H1 (cell line): ENCODE measurements at regions of chr16 and their contacts with region 1.

Region 1: DNA sequence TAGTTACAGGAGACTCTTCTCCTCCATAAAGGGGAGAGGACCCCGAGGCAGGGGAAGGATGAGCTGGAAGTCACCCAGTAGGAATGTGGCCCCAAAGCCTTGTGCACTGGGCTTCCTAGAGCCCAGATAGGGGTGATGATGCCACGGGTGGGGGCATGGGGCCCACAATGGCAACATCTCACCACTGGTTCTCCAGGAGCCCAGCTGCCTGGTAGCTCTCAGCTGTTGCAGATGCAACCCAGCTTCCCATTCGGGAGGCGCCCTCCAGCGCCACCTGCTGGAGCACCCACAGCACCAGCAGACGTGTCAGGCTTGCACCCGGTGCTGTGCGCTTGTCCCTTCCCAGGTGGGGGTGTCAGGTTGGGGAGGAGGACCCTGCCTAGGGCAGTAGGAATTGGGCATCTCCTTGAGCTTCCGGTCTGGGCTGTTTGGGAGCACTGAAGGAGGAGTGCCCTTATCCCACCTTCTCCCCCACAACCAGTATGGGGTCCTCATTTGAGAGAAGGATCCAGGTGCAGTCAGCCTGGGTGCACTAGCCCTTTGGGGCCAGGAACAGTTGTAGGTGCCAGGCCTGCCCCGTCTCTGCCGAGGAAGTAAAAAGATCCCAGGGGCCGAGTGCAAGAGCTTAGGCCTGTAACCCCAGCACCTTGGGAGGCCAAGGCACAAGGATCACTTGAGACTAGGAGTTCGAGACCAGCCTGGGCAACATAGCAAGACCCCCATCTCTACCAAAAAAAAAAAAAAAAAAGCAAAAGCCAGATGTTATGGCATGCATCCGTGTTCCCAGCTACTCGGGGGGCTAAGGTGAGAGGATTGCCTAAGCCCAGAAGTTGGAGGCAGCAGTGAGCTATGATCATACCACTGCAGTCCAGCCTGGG is 14.4 kb downstream of the CDIPT start:
- DNase-seq: peak; percentile 33 to 90
- H3K4me3 ChIP-seq: no peak overlapping the region
- H3K27ac ChIP-seq: no peak overlapping the region
- H3K4me1 ChIP-seq: no peaks in the 10 kb centered on the region; a peak in 1 of 7 replicates
- H3K27me3 ChIP-seq: no peaks in the 10 kb centered on the region
- CTCF ChIP-seq: peak; percentile 88 to 99 (median 94)
- EP300 ChIP-seq: no peak
- POLR2A ChIP-seq: no peak
- RAD21 ChIP-seq: peak; percentile 69 to 85

Region 2: GRCh38 chr16:29708917-29709600 is 139.6 kb before region 1 on chr16:
- CTCF ChIA-PET with region 1: no interaction called
- POLR2A ChIA-PET with region 1: no interaction called
- DNase-seq: peak; percentile 73 to 87
- H3K4me3 ChIP-seq: peak overlapping the region; percentile 65 to 99 (median 74)
- H3K27ac ChIP-seq: peak overlapping the region; percentile 91
- H3K4me1 ChIP-seq: peaks cover 0 to 7% (median 2%) of the 10 kb centered on the region in 4 experiments; a peak in 1 of 7 replicates
- H3K27me3 ChIP-seq: no peaks in the 10 kb centered on the region
- CTCF ChIP-seq: 0 out of 4 replicates have a peak, but pooled peaks of 1 of the 3 experiments have one; percentile 1
- EP300 ChIP-seq: no peak
- POLR2A ChIP-seq: peak; percentile 78 to 93
- RAD21 ChIP-seq: no peak

Region 3: GRCh38 chr16:29756654-29757053 is 92.0 kb before region 1 on chr16:
- CTCF ChIA-PET with region 1: no interaction called
- POLR2A ChIA-PET with region 1: no interaction called
- DNase-seq: no peak
- H3K4me3 ChIP-seq: no peak overlapping the region
- H3K27ac ChIP-seq: no peak overlapping the region
- H3K4me1 ChIP-seq: no peaks in the 10 kb centered on the region
- H3K27me3 ChIP-seq: no peaks in the 10 kb centered on the region
- CTCF ChIP-seq: no peak
- EP300 ChIP-seq: no peak
- POLR2A ChIP-seq: no peak
- RAD21 ChIP-seq: no peak

Region 4: GRCh38 chr16:29784901-29785500 is 63.7 kb before region 1 on chr16:
- CTCF ChIA-PET with region 1: interaction called, 12 read pairs
- POLR2A ChIA-PET with region 1: no interaction called
- DNase-seq: peak; percentile 70 to 95
- H3K4me3 ChIP-seq: peak overlapping the region; percentile 4 to 50 (median 33); a peak in 6 of 8 replicates
- H3K27ac ChIP-seq: no peak overlapping the region
- H3K4me1 ChIP-seq: peaks cover 0 to 8% (median 2%) of the 10 kb centered on the region in 4 experiments; a peak in 4 of 7 replicates
- H3K27me3 ChIP-seq: peaks cover 0 to under 1% (median 0%) of the 10 kb centered on the region in 4 experiments; a peak in 2 of 7 replicates
- CTCF ChIP-seq: peak; percentile 85 to 98 (median 97)
- EP300 ChIP-seq: no peak
- POLR2A ChIP-seq: no peak
- RAD21 ChIP-seq: peak; percentile 54 to 68

Region 5: GRCh38 chr16:29815793-29816693 is 32.6 kb before region 1 on chr16 and contains the start of gene PAGR1:
- CTCF ChIA-PET with region 1: interaction called, 212 read pairs
- POLR2A ChIA-PET with region 1: interaction called, 167 read pairs
- DNase-seq: peak; percentile 98
- H3K4me3 ChIP-seq: peak within 1 kb of the TSS; percentile 59 to 91 (median 83)
- H3K27ac ChIP-seq: peak within 1 kb of the TSS; percentile 94; the same call in 1 of the 2 replicates
- H3K4me1 ChIP-seq: peaks cover 0 to 36% (median 23%) of the 10 kb centered on the region in 4 experiments; a peak in 6 of 7 replicates
- H3K27me3 ChIP-seq: no peaks in the 10 kb centered on the region
- CTCF ChIP-seq: peak in 2 of 3 experiments; percentile 71 to 78; a peak in 3 of 4 replicates
- EP300 ChIP-seq: no peak
- POLR2A ChIP-seq: peak in 1 of 2 experiments; percentile 86; a peak in 2 of 3 replicates
- RAD21 ChIP-seq: peak; percentile 60 to 72
- total RNA-seq, gene PAGR1: 56.4 and 56.6 TPM in 2 replicates

Region 6: GRCh38 chr16:29836623-29837022 is 12.0 kb before region 1 on chr16:
- CTCF ChIA-PET with region 1: interaction called, 28 read pairs
- POLR2A ChIA-PET with region 1: interaction called, 5 read pairs
- DNase-seq: no peak
- H3K4me3 ChIP-seq: no peak overlapping the region
- H3K27ac ChIP-seq: no peak overlapping the region
- H3K4me1 ChIP-seq: peaks cover 0 to 2% (median 0%) of the 10 kb centered on the region in 4 experiments; a peak in 1 of 7 replicates
- H3K27me3 ChIP-seq: no peaks in the 10 kb centered on the region
- CTCF ChIP-seq: no peak
- EP300 ChIP-seq: no peak
- POLR2A ChIP-seq: no peak
- RAD21 ChIP-seq: no peak

Region 7: DNA sequence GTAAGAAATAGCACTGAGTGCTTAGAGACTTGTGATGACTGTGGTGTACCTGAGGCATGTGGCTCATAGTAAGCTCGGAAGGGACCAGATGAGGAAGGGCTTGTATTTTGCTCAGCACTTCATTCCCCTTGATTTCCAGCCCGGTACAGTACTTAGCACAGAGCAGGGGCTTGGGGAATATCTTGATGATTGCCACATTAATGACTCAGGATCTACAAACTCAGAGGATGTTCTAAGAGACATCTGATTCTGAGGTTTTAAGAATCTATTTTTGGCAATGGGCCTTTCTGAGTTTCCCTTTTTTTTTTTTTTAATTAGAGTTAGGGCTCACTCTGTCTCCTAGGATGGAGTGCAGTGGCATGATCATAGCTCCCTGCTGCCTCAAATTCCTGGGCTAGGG is 60.7 kb after region 1 on chr16:
- CTCF ChIA-PET with region 1: interaction called, 14 read pairs
- POLR2A ChIA-PET with region 1: no interaction called
- DNase-seq: no peak
- H3K4me3 ChIP-seq: no peak overlapping the region
- H3K27ac ChIP-seq: no peak overlapping the region
- H3K4me1 ChIP-seq: peaks cover 0 to 6% (median 2%) of the 10 kb centered on the region in 4 experiments; a peak in 3 of 7 replicates
- H3K27me3 ChIP-seq: no peaks in the 10 kb centered on the region
- CTCF ChIP-seq: no peak
- EP300 ChIP-seq: no peak
- POLR2A ChIP-seq: no peak
- RAD21 ChIP-seq: no peak